ENCODE measurements at regions of chr19 and their contacts with region 1.

Region 1: GRCh38 chr19:46860125-46860845 is 512 bp upstream of the ARHGAP35 start:
- DNase-seq: peak; percentile 98 to 100
- ATAC-seq: peak; percentile 75 to 86
- H3K4me3 ChIP-seq: peak overlapping the region; percentile 94
- H3K27ac ChIP-seq: peak overlapping the region; percentile 99
- H3K4me1 ChIP-seq: peaks cover 55% of the 10 kb centered on the region
- CTCF ChIP-seq: no peak
- EP300 ChIP-seq: peak in 1 of 2 experiments; percentile 13; a peak in 1 of 5 replicates
- POLR2A ChIP-seq: peak; percentile 91; the same call in 1 of the 2 replicates
- RAD21 ChIP-seq: peak in 1 of 2 experiments; percentile 23; a peak in 1 of 5 replicates

Region 2: GRCh38 chr19:46503848-46504453 is 356.3 kb before region 1 on chr19:
- CTCF ChIA-PET with region 1: no interaction called
- POLR2A ChIA-PET with region 1: no interaction called
- DNase-seq: no peak
- ATAC-seq: no peak
- H3K4me3 ChIP-seq: no peak overlapping the region
- H3K27ac ChIP-seq: no peak overlapping the region
- H3K4me1 ChIP-seq: no peaks in the 10 kb centered on the region
- CTCF ChIP-seq: no peak
- EP300 ChIP-seq: no peak
- POLR2A ChIP-seq: no peak
- RAD21 ChIP-seq: no peak

Region 3: DNA sequence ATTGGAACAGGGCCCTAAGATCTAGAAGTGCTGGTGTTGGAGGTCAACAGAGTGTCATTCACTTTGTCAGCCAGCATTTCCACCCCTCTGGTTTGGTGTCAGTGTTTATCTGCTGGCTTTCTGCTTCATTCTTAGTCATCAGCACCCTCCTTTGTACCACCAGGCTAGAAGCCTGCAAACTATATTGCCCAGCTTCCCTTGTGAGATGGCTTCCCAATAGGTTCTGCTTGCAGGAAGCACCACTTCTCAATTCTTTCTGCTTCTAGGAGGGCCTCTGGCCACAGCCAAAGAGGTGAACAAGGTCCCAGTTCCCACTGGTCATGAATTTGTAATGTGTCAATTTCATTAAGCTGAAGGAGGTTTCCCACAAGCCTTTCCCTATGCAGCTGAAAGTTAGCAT is 295.6 kb before region 1 on chr19:
- CTCF ChIA-PET with region 1: no interaction called
- POLR2A ChIA-PET with region 1: no interaction called
- DNase-seq: no peak
- ATAC-seq: no peak
- H3K4me3 ChIP-seq: no peak overlapping the region
- H3K27ac ChIP-seq: no peak overlapping the region
- H3K4me1 ChIP-seq: no peaks in the 10 kb centered on the region
- CTCF ChIP-seq: no peak
- EP300 ChIP-seq: no peak
- POLR2A ChIP-seq: no peak
- RAD21 ChIP-seq: no peak

Region 4: GRCh38 chr19:46840136-46840942 is 19.9 kb before region 1 on chr19:
- CTCF ChIA-PET with region 1: interaction called, 45 read pairs
- POLR2A ChIA-PET with region 1: no interaction called
- DNase-seq: peak in 1 of 2 experiments; percentile 77
- ATAC-seq: peak; percentile 61 to 77; a peak in 5 of 6 replicates
- H3K4me3 ChIP-seq: no peak overlapping the region
- H3K27ac ChIP-seq: peak overlapping the region in 1 of 2 experiments; percentile 20; a peak in 2 of 6 replicates
- H3K4me1 ChIP-seq: peaks cover 18% of the 10 kb centered on the region; the same call in 2 of the 3 replicates
- CTCF ChIP-seq: peak; percentile 96
- EP300 ChIP-seq: no peak
- POLR2A ChIP-seq: no peak
- RAD21 ChIP-seq: peak; percentile 95

Region 5: DNA sequence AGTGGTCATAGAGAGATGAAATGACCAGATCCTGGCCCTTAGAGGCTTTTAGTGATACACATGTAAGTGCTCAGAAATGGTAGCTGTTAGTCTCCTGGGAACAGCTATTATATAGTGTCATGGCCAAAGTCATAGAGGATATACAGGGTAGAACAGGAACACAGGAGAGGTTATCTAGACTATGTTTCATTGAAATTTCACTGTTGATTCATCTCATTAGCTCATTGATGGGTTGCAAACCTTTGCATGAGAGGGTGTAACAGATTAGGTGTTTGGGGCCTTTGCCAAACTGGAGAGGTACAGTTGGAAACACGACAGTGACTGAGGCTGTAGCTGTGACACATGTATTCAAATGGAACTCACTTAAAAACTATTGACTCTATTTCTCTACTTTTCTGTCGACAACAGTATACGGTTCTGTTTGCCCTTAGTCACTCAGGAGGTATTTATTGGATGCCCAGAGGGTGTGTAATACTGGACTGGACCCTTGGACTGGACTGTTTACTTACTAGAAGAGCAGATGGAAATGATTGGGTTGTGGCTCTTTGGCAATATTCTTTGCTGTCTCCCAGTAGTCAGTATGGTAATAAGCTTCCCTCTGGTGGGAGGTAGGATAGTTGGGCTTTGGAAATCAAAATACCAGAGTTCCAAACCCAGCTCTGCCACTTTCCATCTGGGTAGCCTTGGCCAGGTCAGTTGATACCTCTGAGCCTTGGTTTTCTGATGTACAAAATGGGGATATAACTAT is 30.3 kb after region 1 on chr19:
- CTCF ChIA-PET with region 1: interaction called, 12 read pairs
- POLR2A ChIA-PET with region 1: interaction called, 13 read pairs
- DNase-seq: peak; percentile 64 to 87
- ATAC-seq: peak; percentile 91 to 96
- H3K4me3 ChIP-seq: 0 out of 3 replicates have a peak overlapping the region, but pooled peaks have one; percentile 7
- H3K27ac ChIP-seq: peak overlapping the region; percentile 69 to 83
- H3K4me1 ChIP-seq: peaks cover 69% of the 10 kb centered on the region
- CTCF ChIP-seq: no peak
- EP300 ChIP-seq: no peak
- POLR2A ChIP-seq: no peak
- RAD21 ChIP-seq: peak; percentile 36 to 41; a peak in 3 of 5 replicates

Region 6: GRCh38 chr19:46919324-46919723 is 59.0 kb after region 1 on chr19:
- CTCF ChIA-PET with region 1: interaction called, 19 read pairs
- POLR2A ChIA-PET with region 1: interaction called, 3 read pairs
- DNase-seq: no peak
- ATAC-seq: no peak
- H3K4me3 ChIP-seq: no peak overlapping the region
- H3K27ac ChIP-seq: no peak overlapping the region
- H3K4me1 ChIP-seq: peaks cover 39% of the 10 kb centered on the region
- CTCF ChIP-seq: no peak
- EP300 ChIP-seq: no peak
- POLR2A ChIP-seq: no peak
- RAD21 ChIP-seq: no peak

Region 7: DNA sequence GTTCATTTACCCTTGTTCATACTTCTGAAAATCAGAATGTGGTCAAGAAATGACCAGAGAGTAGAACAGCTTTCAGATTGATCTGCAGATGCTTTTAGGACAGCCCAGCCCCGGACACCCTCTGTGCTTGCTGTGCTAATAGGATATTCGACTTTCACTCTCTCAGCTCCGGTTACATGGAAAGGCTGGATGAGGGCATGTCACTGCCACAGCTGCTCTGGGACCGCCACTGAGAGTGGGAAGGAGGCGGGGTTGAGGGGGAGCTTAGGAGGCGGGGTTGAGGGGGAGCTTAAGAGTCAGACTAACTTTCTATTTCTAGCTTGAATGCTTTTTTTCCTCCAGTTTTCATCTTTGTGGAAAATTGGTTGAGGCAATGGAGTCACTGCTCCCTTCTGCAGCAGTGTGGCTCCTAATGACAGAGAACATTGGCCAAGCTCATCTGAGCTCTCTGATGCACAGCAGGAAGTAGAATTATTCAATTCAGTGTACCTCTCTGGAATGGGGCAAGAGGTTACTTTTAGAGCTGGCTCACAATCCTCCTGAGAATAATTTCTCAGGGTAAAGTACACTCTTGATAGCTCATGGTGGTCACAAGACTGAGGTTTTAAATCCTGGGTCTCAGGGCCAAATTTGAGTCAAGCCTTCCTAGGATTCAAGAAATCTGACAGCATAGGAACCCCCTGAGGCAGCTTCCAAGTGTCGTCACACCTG is 84.8 kb after region 1 on chr19:
- CTCF ChIA-PET with region 1: interaction called, 20 read pairs
- POLR2A ChIA-PET with region 1: interaction called, 6 read pairs
- DNase-seq: no peak
- ATAC-seq: peak in 1 of 2 experiments; percentile 52; a peak in 3 of 6 replicates
- H3K4me3 ChIP-seq: no peak overlapping the region
- H3K27ac ChIP-seq: peak overlapping the region in 1 of 2 experiments; percentile 1; a peak in 1 of 6 replicates
- H3K4me1 ChIP-seq: peaks cover 40% of the 10 kb centered on the region
- CTCF ChIP-seq: no peak
- EP300 ChIP-seq: no peak
- POLR2A ChIP-seq: no peak
- RAD21 ChIP-seq: no peak

Region 8: DNA sequence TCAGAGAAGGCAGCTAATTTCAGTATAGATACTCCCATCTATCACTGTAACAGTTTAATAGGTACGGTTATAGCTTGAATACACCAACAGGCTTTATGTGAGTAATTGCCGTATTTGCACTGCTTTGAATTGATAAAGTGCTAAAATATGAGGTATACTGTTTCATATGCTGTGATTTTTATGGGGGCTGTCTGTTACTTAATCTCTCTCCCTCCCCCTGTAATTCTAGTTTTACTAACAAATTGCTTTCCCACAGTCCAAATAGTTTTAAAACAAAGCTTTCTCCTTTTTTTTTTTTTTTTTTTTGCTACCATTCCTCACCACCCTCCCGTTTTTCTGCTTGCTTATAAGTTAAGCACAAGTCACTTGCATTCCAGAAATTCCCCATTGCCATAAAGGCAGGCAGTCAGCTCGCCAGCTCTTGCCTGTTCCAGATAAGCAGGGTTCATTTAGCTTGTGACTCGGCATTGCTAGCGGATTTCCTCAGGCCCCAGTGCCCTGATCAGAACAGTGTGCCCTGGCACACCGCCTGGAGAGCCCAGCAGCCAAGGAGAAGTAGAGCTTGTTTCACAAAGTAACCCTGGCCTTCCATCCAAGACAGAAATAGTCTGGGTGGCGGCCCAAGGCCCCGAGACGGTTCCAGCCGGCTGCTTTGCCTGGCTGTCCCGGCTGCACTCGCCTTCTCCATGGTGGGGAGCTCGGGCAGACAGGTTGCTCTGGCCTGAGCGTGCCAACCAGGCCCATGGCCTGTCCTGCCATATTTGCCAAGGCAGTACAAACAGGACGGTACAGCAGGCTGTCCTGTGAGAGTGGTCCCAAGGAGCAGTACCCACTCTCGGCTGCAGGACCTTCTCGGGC is 115.9 kb after region 1 on chr19:
- CTCF ChIA-PET with region 1: interaction called, 24 read pairs
- POLR2A ChIA-PET with region 1: interaction called, 3 read pairs
- DNase-seq: peak in 1 of 2 experiments; percentile 58
- ATAC-seq: peak; percentile 38 to 75
- H3K4me3 ChIP-seq: no peak overlapping the region
- H3K27ac ChIP-seq: peak overlapping the region; percentile 61 to 76
- H3K4me1 ChIP-seq: peaks cover 36% of the 10 kb centered on the region
- CTCF ChIP-seq: no peak
- EP300 ChIP-seq: no peak
- POLR2A ChIP-seq: no peak
- RAD21 ChIP-seq: no peak

Region 9: GRCh38 chr19:47013041-47013517 is 152.8 kb after region 1 on chr19:
- CTCF ChIA-PET with region 1: interaction called, 32 read pairs
- POLR2A ChIA-PET with region 1: interaction called, 3 read pairs
- DNase-seq: peak in 1 of 2 experiments; percentile 83
- ATAC-seq: peak; percentile 94 to 96
- H3K4me3 ChIP-seq: no peak overlapping the region
- H3K27ac ChIP-seq: peak overlapping the region; percentile 47 to 76
- H3K4me1 ChIP-seq: peaks cover 4% of the 10 kb centered on the region; the same call in 1 of the 3 replicates
- CTCF ChIP-seq: peak; percentile 95
- EP300 ChIP-seq: no peak
- POLR2A ChIP-seq: no peak
- RAD21 ChIP-seq: peak; percentile 98